ENCODE measurements at regions of chr9 and their contacts with region 1.

Region 1: DNA sequence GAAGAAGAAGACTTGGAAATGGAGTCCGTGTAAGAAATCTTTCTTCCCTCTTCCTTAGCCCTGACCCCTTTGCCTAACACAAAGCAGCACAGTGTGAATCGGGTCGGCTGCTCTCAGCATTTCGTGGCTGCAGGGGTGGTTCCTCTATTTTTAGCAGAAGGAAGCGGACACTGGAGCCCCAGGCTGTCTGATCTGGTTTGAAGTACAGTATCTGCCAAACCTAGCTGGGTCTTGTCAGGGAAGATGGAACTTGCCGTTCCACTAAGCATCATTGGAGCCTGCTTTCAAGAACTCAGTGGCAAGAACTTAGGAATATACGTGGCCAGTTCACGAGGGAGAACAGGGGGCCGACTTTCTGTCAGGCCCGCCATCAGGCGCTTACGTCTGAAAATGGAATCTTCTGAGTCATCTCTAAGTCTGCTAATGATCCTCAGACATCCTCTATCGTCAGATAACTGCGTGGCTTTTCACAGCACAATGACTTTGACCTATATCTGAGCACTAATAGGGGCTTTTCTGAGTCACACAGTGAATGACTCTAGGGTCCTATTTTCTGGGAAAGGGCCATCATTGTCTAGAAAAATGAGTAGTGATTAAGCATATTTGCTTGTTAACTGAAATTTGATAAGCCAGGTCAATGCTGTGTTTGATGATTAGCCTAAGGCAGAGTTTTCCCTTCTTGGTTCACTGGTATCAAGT is 43.3 kb upstream of the NCS1 start:
- DNase-seq: peak; percentile 50
- ATAC-seq: peak; percentile 79
- H3K4me3 Mint-ChIP-seq: peak overlapping the region; percentile 83
- H3K27ac Mint-ChIP-seq: peak overlapping the region; percentile 99
- H3K4me1 Mint-ChIP-seq: peaks cover 39% of the 10 kb centered on the region
- H3K27me3 Mint-ChIP-seq: no peaks in the 10 kb centered on the region
- CTCF ChIP-seq: no peak

Region 2: DNA sequence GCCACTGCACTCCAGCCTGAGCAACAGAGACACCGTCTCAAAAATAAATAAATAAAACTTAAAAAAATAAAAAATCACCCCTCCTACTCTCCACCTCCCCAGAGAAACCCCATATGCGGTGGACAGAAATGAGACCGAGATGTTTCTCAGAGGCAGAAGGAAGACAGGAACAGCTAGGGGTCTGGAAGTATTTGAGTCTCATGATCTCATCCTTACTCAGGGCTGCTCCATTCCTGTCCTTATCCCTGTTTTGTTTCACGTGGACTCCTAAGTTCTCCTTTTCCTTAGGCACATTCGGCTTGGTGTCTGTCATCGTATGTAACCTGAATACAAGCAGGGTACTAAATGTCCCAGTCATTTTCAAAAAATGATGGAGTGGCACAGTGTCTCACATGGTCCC is 584.1 kb before region 1 on chr9:
- CTCF ChIA-PET with region 1: no interaction called
- POLR2A ChIA-PET with region 1: no interaction called
- intact Hi-C with region 1: no loop called
- DNase-seq: no peak
- ATAC-seq: no peak
- H3K4me3 Mint-ChIP-seq: no peak overlapping the region
- H3K27ac Mint-ChIP-seq: no peak overlapping the region
- H3K4me1 Mint-ChIP-seq: no peaks in the 10 kb centered on the region
- H3K27me3 Mint-ChIP-seq: peaks cover 27% of the 10 kb centered on the region
- CTCF ChIP-seq: no peak

Region 3: DNA sequence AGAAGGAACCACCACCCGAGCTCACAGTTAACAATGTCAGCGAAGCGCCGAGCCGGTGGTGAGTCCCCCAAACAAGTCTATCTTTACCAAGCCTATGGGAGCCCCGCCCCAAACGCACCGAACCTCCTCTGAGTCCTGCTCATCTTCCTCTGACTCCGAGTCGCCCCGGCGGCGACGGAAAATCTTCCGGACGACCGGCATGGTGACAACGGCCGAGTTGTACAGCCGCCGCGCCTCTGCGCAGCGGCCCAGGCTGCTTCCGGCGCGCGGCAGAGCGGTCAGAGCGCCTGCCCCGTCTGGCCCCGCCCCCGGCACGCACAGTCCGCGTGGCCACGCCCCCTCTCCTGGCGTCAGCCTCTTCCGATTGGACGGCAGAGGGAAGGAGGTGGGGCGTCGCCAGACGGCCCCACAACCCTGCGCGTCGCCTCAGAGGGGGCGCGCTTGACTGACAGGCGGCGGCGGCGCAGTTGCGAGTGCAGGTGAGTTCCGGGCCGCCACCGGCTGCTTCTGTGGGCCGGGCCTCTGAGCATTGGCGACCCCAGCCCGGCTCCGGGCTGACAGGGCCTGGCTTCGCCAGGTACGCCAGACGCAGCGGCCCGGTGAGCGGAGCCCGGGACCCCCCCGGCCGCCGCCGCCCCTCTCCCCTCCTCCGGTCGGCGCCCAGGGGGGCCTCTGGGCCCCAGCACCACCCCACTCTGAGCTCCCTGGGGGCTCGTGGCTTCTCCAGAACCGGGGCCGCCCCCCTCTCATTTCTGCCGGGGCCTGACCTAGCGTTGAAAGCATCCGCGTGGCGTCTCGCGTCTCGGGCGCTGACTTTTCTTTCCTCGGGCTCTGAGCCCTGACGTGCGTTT is 293.6 kb before region 1 on chr9 and contains the starts of genes C9orf78 and USP20:
- CTCF ChIA-PET with region 1: no interaction called
- POLR2A ChIA-PET with region 1: interaction called, 10 read pairs
- intact Hi-C with region 1: no loop called
- DNase-seq: peak; percentile 97
- ATAC-seq: peak; percentile 96
- H3K4me3 Mint-ChIP-seq: peak within 1 kb of the TSS; percentile 99
- H3K27ac Mint-ChIP-seq: peak within 1 kb of the TSS; percentile 98
- H3K4me1 Mint-ChIP-seq: peaks cover 46% of the 10 kb centered on the region
- H3K27me3 Mint-ChIP-seq: no peaks in the 10 kb centered on the region
- CTCF ChIP-seq: no peak
- total RNA-seq, gene C9orf78: 34.1 and 42.7 TPM in 2 replicates
- total RNA-seq, gene USP20: 28.1 and 31.6 TPM in 2 replicates

Region 4: DNA sequence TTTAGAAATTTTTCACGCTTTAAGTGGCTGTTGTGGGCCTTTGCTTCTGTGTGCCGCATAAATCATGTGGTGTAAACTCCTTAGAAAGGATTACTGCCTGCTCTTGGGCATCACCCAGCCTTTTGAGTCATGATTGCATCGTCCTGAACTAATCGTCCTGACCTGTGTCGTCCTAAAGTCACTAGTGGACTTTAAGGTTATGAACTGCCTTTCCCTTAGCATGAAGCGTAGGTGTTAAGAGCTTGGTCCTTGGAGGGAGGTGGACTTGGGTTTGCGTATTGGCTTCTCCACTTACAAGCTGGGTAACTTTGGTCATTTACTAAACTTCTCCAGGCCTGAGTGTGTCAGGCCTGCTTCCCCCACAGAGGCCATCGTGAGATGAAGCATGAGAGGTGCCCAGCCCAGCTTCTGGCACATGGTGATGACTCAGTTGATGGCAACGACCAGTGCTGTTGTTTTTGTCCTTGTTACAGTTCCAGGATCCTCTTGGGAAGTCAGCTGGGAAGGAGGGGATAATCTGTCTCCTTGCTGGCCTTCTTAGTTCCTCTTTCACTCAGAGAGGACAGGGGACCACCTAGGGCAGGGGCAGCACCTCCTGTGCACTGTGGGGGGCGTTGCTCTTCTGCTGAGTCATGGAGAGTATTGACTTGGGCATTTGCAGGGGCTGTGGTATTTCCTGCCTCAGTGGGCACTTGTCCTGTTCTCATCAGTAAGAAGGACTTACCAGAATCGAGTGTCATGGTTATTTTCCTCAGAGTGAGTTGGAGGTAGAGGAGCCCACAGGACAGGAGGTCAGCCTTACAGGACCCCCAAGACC is 10.9 kb before region 1 on chr9:
- CTCF ChIA-PET with region 1: no interaction called
- POLR2A ChIA-PET with region 1: interaction called, 13 read pairs
- intact Hi-C with region 1: no loop called
- DNase-seq: no peak
- ATAC-seq: no peak
- H3K4me3 Mint-ChIP-seq: no peak overlapping the region
- H3K27ac Mint-ChIP-seq: peak overlapping the region; percentile 3
- H3K4me1 Mint-ChIP-seq: peaks cover 9% of the 10 kb centered on the region
- H3K27me3 Mint-ChIP-seq: no peaks in the 10 kb centered on the region
- CTCF ChIP-seq: no peak

Region 5: DNA sequence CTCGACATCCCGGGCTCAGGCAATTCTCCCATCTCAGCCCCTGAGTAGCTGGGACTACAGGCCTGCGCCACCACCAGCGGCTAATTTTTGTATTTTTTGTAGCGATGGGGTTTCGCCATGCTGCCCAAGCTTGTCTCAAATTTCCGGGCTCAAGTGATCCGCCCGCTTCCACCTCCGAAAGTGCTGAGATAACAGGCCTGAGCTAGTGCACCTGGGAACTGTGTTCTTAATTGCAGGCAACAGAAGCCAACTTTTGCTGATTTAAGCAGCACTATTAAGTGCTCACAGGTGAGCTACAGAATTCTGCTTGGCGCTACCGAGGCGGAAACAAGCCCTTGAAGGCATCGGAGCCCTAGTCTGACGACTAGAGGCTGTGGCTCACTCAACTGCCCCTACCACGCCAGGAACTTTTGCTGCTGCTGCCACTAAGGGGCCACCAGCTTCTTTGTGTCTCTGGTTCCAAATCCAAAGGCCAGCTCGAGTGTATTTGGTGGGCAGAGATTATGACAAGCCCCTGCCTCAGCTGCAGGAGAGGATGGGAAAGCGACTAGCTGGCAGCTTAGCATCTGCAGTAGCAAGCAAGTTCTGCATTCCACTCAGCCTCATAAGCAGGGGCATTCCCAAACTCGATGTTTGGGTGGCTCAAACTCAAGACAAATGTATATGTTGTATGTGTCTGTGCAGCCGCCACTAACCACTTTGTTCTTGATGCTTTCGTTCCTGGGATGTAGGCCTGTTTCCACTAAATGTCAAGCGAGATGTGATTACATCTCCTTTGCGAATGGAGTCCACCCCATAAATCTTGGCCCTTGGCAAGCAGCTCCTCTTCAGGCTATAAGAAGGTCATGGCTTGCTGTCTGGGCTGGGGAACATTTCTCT is 126.1 kb after region 1 on chr9:
- CTCF ChIA-PET with region 1: no interaction called
- POLR2A ChIA-PET with region 1: no interaction called
- intact Hi-C with region 1: no loop called
- DNase-seq: no peak
- ATAC-seq: no peak
- H3K4me3 Mint-ChIP-seq: no peak overlapping the region
- H3K27ac Mint-ChIP-seq: no peak overlapping the region
- H3K4me1 Mint-ChIP-seq: no peaks in the 10 kb centered on the region
- H3K27me3 Mint-ChIP-seq: peaks cover 29% of the 10 kb centered on the region
- CTCF ChIP-seq: no peak

Region 6: DNA sequence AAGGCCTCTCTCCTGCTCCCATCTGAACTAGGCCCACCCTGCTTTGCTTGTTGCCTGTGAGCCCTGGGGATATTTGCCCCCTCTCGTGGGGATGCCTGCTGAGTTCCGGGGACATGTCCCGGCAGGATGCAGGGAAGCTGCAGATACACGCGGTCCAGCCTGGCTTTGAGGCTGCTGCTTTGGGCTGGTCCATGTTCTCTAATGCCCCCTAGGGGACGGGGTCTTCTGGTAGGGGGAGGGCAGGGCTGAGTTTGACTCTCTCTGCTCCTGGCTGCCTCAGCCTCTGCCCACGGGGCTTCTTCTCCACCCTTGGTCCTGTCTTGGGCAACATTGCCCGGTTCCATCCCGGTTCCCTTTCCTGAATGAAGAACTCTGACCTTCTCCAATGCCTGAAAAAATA is 230.9 kb after region 1 on chr9:
- CTCF ChIA-PET with region 1: no interaction called
- POLR2A ChIA-PET with region 1: no interaction called
- intact Hi-C with region 1: loop called (anchors 1 kb)
- DNase-seq: no peak
- ATAC-seq: no peak
- H3K4me3 Mint-ChIP-seq: no peak overlapping the region
- H3K27ac Mint-ChIP-seq: no peak overlapping the region
- H3K4me1 Mint-ChIP-seq: peaks cover 20% of the 10 kb centered on the region
- H3K27me3 Mint-ChIP-seq: no peaks in the 10 kb centered on the region
- CTCF ChIP-seq: no peak